Natural killer cell (primary cell): ENCODE measurements at regions of chr3 and their contacts with region 1.

Region 1: DNA sequence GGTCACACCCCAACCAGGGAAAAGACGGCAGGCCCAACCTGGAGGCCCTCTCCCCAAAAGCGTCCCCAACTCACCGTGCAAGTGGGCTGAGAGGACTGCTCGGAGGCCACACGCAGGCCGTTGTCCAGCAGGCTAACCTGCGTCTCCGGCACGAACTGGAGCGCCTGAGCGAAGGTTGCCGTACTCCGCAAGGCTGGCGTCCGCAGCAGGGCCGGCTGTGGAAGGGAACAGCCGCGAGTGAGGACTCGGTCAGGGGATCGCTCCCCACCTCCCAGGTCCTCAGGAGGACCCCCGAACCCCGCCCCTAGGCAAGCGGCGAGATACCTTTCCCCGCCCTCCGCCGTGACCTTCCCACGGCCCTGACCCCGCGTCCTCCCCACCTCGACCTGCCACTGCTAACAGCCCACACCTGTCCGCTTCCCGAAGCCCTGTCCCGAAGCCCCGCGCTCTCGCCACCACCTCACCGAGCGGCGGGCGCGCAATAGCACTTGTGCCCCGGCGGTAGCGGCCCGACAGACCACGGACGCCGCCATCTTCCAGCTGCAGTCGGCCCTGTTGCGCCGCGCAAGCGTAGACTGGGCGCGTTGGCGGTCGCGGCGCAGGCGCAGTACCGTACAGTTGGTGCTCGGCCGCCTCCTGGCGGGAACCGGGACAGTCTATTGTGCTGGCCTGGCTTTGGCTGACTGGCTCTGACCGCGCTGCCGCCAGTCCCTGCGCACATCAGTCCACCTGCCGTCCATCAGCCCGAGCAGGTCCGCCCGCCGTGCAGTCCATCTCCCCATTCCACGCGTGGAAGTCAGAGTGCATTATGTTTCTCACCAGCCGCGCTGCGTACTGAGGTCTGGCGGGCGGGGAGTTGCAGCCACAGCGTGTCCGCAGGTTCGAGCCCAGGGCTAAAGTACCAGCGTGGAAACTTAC is at the start of gene UQCRC1:
- DNase-seq: peak; percentile 93 to 97
- ATAC-seq: peak; percentile 98 to 100 (median 99)
- H3K4me3 ChIP-seq: peak within 1 kb of the TSS; percentile 99
- H3K4me3 Mint-ChIP-seq: peak within 1 kb of the TSS; percentile 99
- H3K27ac ChIP-seq: peak within 1 kb of the TSS; percentile 81
- H3K27ac Mint-ChIP-seq: peak within 1 kb of the TSS; percentile 90 to 98
- H3K4me1 ChIP-seq: peaks cover 14% of the 10 kb centered on the region
- H3K4me1 Mint-ChIP-seq: peaks cover 6 to 21% of the 10 kb centered on the region in 2 donors
- H3K27me3 ChIP-seq: no peaks in the 10 kb centered on the region
- H3K27me3 Mint-ChIP-seq: no peaks in the 10 kb centered on the region
- CTCF ChIP-seq: peak; percentile 76
- total RNA-seq, gene UQCRC1: 117 to 139 (median 124) TPM

Region 2: DNA sequence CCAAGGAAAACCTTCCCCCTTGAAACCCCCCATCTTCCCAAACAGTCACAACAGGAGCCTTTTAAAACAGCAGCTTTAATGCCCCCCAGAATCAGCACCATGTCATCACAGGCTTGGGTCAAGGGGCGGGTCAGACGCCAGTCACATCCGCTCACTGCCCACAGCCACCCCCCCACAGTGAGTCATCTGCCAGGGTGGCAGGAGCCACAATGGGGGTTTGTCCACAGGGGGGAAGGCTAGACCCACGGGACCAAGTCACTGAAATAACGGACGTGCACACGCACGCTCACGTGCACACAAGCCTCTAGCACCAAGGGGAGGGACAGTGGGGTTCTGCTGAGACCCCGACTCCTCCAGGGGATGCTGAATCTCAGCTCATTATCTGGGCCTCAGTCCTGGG is 45.3 kb before region 1 on chr3:
- intact Hi-C with region 1: loop called (anchors 2 kb)
- DNase-seq: peak; percentile 59 to 80
- ATAC-seq: peak; percentile 92 to 96 (median 95)
- H3K4me3 ChIP-seq: no peak overlapping the region
- H3K4me3 Mint-ChIP-seq: peak overlapping the region; percentile 65
- H3K27ac ChIP-seq: peak overlapping the region; percentile 47
- H3K27ac Mint-ChIP-seq: peak overlapping the region; percentile 20 to 94
- H3K4me1 ChIP-seq: peaks cover 53% of the 10 kb centered on the region
- H3K4me1 Mint-ChIP-seq: peaks cover 15 to 47% of the 10 kb centered on the region in 2 donors
- H3K27me3 ChIP-seq: no peaks in the 10 kb centered on the region
- H3K27me3 Mint-ChIP-seq: no peaks in the 10 kb centered on the region
- CTCF ChIP-seq: no peak